ENCODE measurements at regions of chr5 and their contacts with region 1.

Region 1: DNA sequence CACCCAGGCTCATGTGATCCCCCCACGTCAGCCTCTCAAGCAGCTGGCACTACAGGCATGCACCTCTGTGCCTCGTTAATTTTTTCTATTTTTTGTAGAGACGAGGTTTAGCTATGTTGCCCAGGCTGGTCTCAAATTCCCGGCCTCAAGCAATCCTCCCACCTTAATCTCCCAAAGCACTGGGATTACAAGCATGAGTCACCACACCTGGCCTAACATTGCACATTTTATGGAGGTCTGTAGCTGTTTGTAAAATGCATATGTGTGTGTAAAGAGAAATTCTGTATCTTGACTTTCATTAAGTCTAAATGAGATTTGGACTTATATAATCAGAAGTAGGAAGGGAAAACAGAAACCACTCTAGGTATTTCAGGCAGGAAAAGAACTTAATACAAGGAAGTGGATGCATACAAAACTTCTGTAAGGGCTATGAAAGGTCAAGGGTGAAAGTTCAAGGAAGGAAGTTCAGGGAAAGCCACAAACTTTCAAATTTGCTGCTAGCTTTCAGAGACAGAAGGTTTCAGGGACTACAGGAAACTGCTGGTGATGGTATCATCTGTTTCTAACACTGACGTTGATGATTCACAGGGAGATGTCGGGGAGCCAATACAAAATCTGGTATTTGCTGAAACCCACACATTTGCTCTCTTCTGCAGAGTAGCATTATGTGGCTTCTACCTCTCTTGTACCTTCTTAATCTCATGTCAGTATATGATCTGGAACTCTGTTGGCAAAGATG is 209.4 kb downstream of the PIK3R1 start:
- DNase-seq: peak; percentile 82
- H3K4me3 Mint-ChIP-seq: peak overlapping the region; percentile 27
- H3K27ac Mint-ChIP-seq: peak overlapping the region; percentile 73
- H3K4me1 Mint-ChIP-seq: peaks cover 46% of the 10 kb centered on the region
- H3K27me3 Mint-ChIP-seq: peaks cover 15% of the 10 kb centered on the region

Region 2: DNA sequence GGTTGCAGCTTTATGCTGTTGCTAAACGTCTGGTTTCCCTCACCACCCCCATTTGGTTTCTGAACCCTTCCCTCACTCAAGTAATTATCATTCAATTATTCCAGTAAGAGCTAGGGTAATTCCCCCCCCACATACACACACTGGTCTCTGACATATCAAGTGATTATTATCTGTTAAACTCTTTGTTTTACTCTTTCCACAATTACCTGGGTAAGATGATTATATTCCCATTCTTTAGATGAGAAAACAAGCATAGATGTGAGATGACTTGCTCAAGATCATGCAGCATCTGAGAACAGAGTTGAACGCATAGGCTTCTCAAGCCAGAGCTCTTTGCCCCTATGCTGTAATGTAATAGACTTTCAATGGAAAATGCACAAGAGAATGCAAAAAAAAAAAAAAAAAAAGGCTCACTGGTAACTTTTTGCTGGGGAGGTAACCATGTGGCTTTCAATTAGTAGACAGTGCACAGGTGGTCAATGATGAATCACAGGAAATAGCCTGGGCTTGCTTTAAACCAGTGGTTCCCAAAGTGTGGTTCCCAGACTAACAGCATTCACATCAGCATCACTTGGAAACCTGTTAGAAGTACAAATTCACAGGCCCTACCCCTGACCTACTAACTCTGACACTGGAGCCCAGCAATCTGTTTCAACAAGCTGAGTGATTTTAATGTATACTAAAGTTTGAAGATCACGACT is 121.8 kb before region 1 on chr5:
- intact Hi-C with region 1: loop called (anchors 1 kb)
- DNase-seq: no peak
- H3K4me3 Mint-ChIP-seq: peak overlapping the region; percentile 9
- H3K27ac Mint-ChIP-seq: peak overlapping the region; percentile 71
- H3K4me1 Mint-ChIP-seq: peaks cover 32% of the 10 kb centered on the region
- H3K27me3 Mint-ChIP-seq: peaks cover 8% of the 10 kb centered on the region

Region 3: DNA sequence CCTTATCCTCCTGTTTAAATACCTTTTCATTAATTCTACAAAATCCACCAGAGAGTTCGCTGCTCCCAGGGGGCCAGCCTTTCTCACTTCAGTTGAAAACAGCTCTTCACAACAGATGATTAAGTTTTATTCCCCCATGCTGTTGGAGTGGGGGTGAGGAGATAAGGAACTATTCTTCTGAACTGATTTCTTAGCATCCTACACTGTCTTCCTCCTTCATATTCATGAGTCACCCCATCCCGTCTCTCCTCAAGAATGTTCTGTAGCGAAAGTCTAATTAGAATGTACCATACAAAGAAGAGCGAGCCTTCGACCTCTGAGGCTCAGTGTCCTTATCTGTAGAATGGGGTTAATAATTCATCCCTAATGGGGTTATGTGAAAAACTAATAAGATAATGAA is 71.4 kb before region 1 on chr5:
- intact Hi-C with region 1: no loop called
- DNase-seq: no peak
- H3K4me3 Mint-ChIP-seq: no peak overlapping the region
- H3K27ac Mint-ChIP-seq: no peak overlapping the region
- H3K4me1 Mint-ChIP-seq: peaks cover 2% of the 10 kb centered on the region
- H3K27me3 Mint-ChIP-seq: no peaks in the 10 kb centered on the region

Region 4: DNA sequence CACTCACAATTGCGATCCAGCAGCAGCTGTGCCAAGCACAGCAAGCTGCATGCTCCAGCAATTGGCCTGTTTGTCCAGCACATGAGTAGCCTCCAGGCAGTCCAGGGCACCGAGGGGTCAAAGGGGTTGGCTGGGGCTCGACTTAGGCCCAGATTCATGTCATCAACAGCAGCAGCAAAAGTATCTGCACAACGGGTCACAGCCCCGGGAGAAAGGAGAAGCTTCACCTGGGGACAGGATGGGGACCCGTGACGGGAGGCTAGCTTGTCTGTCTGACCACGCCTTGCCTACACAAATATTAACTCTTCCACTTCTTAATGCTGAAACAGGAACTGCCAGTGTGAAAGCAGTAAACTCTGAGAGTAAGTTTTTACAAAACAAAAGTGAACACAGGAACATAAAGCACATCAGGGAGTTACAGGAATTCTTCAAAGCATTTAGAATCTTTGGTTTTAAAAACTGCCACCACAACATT is 18.2 kb before region 1 on chr5:
- intact Hi-C with region 1: loop called (anchors 1 kb)
- DNase-seq: peak; percentile 69
- H3K4me3 Mint-ChIP-seq: peak overlapping the region; percentile 57
- H3K27ac Mint-ChIP-seq: peak overlapping the region; percentile 79
- H3K4me1 Mint-ChIP-seq: peaks cover 26% of the 10 kb centered on the region
- H3K27me3 Mint-ChIP-seq: no peaks in the 10 kb centered on the region

Region 5: DNA sequence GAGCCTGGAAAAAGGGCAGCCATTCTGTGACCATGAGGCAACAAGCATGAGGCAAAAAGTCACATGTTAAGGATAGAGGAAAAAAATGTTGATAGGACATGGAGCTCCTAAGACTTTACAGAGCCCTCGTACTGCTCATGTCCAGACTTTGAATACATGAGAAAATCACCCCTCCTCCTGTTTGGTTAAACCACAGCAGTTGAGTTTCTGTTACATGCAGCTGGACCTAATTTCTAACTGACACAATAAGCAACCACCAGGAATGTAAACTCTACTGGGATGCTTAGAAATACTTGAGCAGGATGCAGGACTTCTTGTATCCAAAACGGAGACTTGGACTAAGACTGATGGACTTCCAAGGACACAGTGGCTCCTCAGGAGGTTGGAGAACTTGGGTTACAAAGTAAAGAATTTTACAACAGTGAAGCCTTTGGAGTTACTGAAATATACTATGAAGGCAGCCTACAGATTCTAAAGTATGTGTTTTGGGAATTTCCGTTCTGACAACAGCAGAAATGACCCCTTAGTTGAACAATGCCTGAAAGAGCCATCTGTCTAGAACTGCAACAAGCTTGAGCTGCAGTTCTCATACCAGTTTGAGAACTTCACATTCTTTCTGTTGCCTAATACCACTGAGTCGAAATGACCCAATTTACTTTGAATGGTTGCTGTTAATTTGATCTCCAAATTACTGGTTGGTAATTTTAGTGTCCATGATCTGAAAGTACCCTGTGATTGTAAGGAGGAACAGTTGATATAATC is 59.5 kb after region 1 on chr5:
- intact Hi-C with region 1: no loop called
- DNase-seq: no peak
- H3K4me3 Mint-ChIP-seq: no peak overlapping the region
- H3K27ac Mint-ChIP-seq: no peak overlapping the region
- H3K4me1 Mint-ChIP-seq: no peaks in the 10 kb centered on the region
- H3K27me3 Mint-ChIP-seq: peaks cover 25% of the 10 kb centered on the region

Measured in activated CD4-positive, alpha-beta T cell treated with anti-CD3 and anti-CD28 coated beads, Interleukin-2, amount 10 ng/mL, durations not matched to agents 24 days and 14 days (primary cell).